ENCODE measurements at regions of chr19 and their contacts with region 1.

Region 1: DNA sequence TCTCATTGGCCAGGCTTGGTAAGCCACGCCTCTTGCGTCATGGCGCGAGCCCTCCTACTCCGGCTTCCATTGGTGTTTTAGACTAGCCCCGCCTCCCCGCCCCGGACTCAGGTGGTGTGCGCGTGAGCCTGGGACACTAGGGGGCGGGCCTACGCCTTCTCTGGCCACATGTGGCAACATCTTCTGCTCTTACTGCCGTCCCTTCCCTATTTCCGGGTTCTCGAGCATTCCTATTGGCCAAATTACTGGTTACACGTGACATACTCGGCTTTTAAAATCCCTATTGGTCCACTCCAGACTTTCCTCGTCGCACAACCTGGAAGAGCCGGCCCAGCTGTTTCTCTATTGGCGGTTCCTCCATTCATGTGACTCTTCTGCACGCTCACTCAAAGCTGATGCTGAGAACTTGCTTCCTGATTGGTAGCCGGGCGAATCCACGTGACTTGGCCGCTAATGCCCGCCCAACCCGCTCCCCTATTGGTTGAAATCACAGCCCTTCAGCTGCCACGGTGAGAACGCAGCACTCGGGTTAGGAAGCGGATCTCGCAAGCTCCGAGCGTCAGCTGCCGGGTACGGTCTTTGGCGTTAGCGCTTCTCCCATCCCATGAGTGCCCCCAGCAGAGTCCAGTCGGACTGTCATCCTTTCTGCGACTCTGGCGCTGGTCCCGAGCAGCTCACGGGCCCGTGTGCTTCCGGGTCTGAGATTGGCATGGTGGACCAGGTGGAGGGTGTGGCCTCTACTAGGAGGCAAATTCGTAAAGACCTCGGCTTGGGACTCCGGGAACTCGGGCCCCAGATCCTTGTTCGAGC is at the start of gene BLOC1S3:
- DNase-seq: peak; percentile 97 to 100 (median 100)
- ATAC-seq: peak; percentile 93
- H3K4me3 ChIP-seq: peak within 1 kb of the TSS; percentile 88
- H3K4me3 Mint-ChIP-seq: peak within 1 kb of the TSS; percentile 87 to 99 (median 96)
- H3K27ac ChIP-seq: peak within 1 kb of the TSS; percentile 83
- H3K27ac Mint-ChIP-seq: peak within 1 kb of the TSS; percentile 88 to 98 (median 94)
- H3K4me1 ChIP-seq: peaks cover 23 to 34% of the 10 kb centered on the region in 2 donors
- H3K4me1 Mint-ChIP-seq: peaks cover 9 to 63% (median 49%) of the 10 kb centered on the region in 7 donors
- H3K27me3 ChIP-seq: no peaks in the 10 kb centered on the region
- H3K27me3 Mint-ChIP-seq: no peaks in the 10 kb centered on the region
- total RNA-seq, gene BLOC1S3: 13.7 to 24.9 (median 15.4) TPM

Region 2: DNA sequence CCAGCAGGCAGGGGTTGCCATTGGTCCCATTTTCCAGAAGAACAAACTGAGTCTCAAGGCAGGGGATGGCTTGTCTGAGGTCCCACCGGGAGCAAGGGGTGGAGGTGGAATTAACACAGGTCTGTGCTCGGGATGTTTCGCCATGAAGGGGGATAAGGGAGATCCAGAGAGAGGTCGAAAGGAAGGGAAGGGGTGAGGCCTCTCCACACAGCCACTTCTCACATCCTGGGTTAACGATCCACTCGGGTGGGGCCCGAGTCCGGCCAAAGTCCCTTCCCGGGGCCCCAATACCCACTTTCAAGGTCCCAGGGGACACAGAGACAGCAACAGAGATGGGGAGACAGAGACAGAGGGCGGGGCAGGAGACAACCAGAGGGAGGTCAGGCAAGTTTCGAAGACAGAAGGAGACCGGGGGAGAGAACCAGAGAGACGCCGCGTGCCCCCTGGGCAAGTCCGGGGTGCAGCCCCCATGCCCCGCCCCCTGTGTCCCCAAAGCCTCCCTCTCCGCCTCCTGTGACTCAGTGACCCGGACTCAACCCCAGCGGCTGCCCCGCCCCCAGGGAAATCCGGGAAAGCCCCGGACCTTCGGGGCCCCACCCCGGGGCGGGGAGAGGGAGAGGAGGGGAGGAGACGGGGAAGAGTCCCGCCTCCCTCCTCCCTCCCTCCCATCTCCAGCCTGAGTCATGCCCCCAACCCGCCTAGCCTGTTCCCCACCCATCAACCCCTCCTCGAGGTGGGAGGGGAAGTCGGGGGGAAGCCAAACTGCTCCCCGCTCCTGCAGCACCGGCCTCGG is 431.3 kb before region 1 on chr19:
- CTCF ChIA-PET with region 1: no interaction called
- POLR2A ChIA-PET with region 1: no interaction called
- intact Hi-C with region 1: loop called in 1 of 2 experiments (anchors 1 kb)
- DNase-seq: peak; percentile 51 to 97 (median 61)
- ATAC-seq: peak; percentile 83
- H3K4me3 ChIP-seq: peak overlapping the region; percentile 91
- H3K4me3 Mint-ChIP-seq: peak overlapping the region; percentile 90 to 99 (median 92)
- H3K27ac ChIP-seq: peak overlapping the region; percentile 97
- H3K27ac Mint-ChIP-seq: peak overlapping the region; percentile 87 to 99 (median 94)
- H3K4me1 ChIP-seq: peaks cover 23 to 33% of the 10 kb centered on the region in 2 donors
- H3K4me1 Mint-ChIP-seq: peaks cover 35 to 56% (median 55%) of the 10 kb centered on the region in 7 donors
- H3K27me3 ChIP-seq: no peaks in the 10 kb centered on the region
- H3K27me3 Mint-ChIP-seq: peaks cover 0 to 3% (median 0%) of the 10 kb centered on the region in 5 donors

Region 3: DNA sequence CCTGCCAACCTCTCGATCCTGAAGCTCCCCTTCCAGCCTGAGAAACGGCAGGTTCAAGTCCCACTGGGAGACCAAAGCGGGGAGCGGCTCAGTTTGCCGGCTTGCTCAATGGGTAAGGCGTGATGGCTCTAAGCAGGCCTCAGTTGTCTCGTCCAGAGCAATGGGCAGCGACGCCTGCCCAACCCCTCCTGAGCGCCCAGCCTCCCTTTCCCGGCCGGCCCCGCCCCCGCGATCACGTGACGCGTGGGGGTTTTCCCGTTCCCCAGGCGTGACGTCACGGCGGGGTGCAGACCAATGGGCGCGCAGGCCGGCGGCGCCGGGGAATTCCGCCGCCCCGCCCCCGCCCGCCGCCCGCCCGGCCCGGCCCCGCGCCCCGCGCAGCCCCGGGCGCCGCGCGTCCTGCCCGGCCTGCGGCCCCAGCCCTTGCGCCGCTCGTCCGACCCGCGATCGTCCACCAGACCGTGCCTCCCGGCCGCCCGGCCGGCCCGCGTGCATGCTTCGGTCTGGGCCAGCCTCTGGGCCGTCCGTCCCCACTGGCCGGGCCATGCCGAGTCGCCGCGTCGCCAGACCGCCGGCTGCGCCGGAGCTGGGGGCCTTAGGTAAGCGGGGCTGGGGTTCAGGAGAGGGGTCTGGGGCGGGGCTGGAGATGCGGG is 177.3 kb before region 1 on chr19 and contains the start of gene RELB:
- CTCF ChIA-PET with region 1: no interaction called
- POLR2A ChIA-PET with region 1: interaction called, 8 read pairs
- intact Hi-C with region 1: loop called (anchors 1 kb)
- DNase-seq: peak; percentile 90 to 100 (median 94)
- ATAC-seq: peak; percentile 75
- H3K4me3 ChIP-seq: peak within 1 kb of the TSS; percentile 92
- H3K4me3 Mint-ChIP-seq: peak within 1 kb of the TSS; percentile 91 to 100 (median 96)
- H3K27ac ChIP-seq: peak within 1 kb of the TSS; percentile 100
- H3K27ac Mint-ChIP-seq: peak within 1 kb of the TSS; percentile 93 to 100 (median 100)
- H3K4me1 ChIP-seq: peaks cover 8 to 13% of the 10 kb centered on the region in 2 donors
- H3K4me1 Mint-ChIP-seq: peaks cover 8 to 25% (median 14%) of the 10 kb centered on the region in 7 donors
- H3K27me3 ChIP-seq: no peaks in the 10 kb centered on the region
- H3K27me3 Mint-ChIP-seq: no peaks in the 10 kb centered on the region
- total RNA-seq, gene RELB: 30.7 to 87.3 (median 71.3) TPM

Region 4: DNA sequence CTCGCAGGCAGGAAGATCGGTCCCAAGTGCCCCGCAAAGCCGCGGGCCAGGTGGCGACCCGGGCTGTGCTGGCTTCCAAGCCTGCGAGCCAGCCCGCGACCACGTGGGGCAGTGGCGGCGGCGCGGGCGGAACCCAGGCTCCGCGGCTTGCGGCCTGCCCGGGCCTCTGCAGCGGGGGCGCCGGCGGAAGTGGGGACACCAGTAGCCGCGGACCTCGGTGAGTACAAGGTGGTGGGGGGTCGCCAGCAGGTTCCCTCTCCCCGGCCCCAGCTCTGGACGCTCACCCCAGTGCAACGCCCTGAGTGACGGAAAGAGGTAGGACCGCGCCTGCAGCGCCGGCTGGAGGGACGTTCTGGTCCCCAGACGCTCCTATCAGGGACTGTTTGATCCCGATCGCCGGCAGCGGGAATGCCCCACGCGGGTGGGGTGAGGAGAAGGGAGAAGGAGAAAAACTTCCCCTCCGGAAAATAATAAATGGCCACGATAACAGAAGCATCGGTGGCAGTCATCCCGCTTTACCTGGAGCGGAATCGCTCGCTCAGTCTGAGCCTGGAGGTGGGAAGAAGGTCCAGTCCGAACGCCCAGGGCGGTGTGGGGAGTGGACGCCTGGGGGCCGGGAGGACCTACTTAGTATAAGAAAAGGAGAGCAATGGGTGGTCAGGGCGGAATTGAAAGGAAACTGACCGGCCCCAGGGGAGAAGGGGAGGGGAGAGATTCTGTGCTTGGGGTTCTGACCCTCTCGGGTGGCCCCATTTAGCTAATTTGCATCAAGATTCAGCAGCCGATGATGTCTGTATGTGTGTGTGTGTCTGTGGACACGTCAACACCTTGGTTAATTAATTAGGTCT is 99.2 kb before region 1 on chr19 and contains the start of gene GEMIN7:
- CTCF ChIA-PET with region 1: no interaction called
- POLR2A ChIA-PET with region 1: interaction called, 7 read pairs
- intact Hi-C with region 1: loop called (anchors 1 to 5 kb)
- DNase-seq: peak; percentile 60 to 90 (median 75)
- ATAC-seq: peak; percentile 76
- H3K4me3 ChIP-seq: peak within 1 kb of the TSS; percentile 99
- H3K4me3 Mint-ChIP-seq: peak within 1 kb of the TSS; percentile 87 to 99 (median 94)
- H3K27ac ChIP-seq: peak within 1 kb of the TSS; percentile 86
- H3K27ac Mint-ChIP-seq: peak within 1 kb of the TSS; percentile 79 to 94 (median 84)
- H3K4me1 ChIP-seq: peaks cover 22 to 31% of the 10 kb centered on the region in 2 donors
- H3K4me1 Mint-ChIP-seq: peaks cover 32 to 53% (median 48%) of the 10 kb centered on the region in 7 donors
- H3K27me3 ChIP-seq: no peaks in the 10 kb centered on the region
- H3K27me3 Mint-ChIP-seq: no peaks in the 10 kb centered on the region
- total RNA-seq, gene GEMIN7: 4.9 to 31.6 (median 16.6) TPM

Region 5: DNA sequence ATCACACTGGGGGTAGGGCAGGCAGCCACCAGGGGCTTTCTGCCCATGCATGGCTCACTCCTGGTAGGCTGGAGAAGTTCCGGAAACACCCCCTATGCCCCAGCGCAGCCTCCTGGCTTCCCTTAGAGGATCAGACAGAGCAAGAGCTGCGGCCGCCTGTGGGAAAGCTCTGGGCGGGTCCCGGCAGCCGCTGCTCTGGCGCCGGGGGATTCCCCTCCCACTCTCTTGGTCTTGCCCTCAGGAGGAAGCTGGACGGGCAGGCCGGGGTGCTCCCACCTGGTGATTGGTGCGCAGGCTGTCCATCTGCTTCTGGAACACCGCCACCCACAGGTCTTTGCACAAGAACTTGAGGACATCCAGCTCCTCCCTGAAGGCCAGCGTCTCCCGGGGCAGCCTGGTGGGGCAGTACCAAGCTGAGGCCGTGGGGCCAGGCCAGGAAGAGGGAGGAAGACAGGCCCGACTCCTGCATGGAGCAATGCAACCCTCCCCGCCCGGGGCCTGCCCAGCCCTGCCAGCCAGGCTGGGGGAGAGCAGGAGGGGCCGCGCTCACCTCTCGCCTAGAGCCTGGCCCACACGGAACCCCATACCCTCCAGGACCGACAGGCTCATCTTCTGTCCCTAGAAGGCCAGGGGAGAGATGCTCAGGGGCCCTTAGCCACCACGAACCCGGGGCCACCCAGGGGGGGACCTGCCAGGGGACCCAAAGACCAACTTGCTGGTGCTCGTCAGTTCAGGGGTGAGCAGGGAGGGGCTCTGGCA is 13.7 kb before region 1 on chr19:
- CTCF ChIA-PET with region 1: interaction called, 3 read pairs
- POLR2A ChIA-PET with region 1: interaction called, 16 read pairs
- intact Hi-C with region 1: no loop called
- DNase-seq: peak in 7 of 9 donors; percentile 12 to 75 (median 34)
- ATAC-seq: peak; percentile 85
- H3K4me3 ChIP-seq: no peak overlapping the region
- H3K4me3 Mint-ChIP-seq: peak overlapping the region in 3 of 10 donors; percentile 15 to 33 (median 28)
- H3K27ac ChIP-seq: peak overlapping the region; percentile 54
- H3K27ac Mint-ChIP-seq: peak overlapping the region in 3 of 9 donors; percentile 8 to 76 (median 17)
- H3K4me1 ChIP-seq: peaks cover 9 to 18% of the 10 kb centered on the region in 2 donors
- H3K4me1 Mint-ChIP-seq: peaks cover 6 to 34% (median 23%) of the 10 kb centered on the region in 7 donors
- H3K27me3 ChIP-seq: no peaks in the 10 kb centered on the region
- H3K27me3 Mint-ChIP-seq: no peaks in the 10 kb centered on the region

Region 6: GRCh38 chr19:45405435-45406225 is 227.2 kb after region 1 on chr19:
- CTCF ChIA-PET with region 1: no interaction called
- POLR2A ChIA-PET with region 1: no interaction called
- intact Hi-C with region 1: loop called in 1 of 2 experiments (anchors 1 kb)
- DNase-seq: peak; percentile 62 to 88 (median 81)
- ATAC-seq: peak; percentile 75
- H3K4me3 ChIP-seq: peak overlapping the region; percentile 77
- H3K4me3 Mint-ChIP-seq: peak overlapping the region; percentile 91 to 99 (median 97)
- H3K27ac ChIP-seq: peak overlapping the region; percentile 71
- H3K27ac Mint-ChIP-seq: peak overlapping the region; percentile 90 to 99 (median 94)
- H3K4me1 ChIP-seq: peaks cover 16 to 25% of the 10 kb centered on the region in 2 donors
- H3K4me1 Mint-ChIP-seq: peaks cover 28 to 53% (median 32%) of the 10 kb centered on the region in 7 donors
- H3K27me3 ChIP-seq: peaks cover 10 to 18% of the 10 kb centered on the region in 2 donors
- H3K27me3 Mint-ChIP-seq: peaks cover 15 to 27% (median 21%) of the 10 kb centered on the region in 5 donors

Region 7: GRCh38 chr19:45584332-45585157 is 406.1 kb after region 1 on chr19 and contains the start of gene OPA3:
- CTCF ChIA-PET with region 1: no interaction called
- POLR2A ChIA-PET with region 1: no interaction called
- intact Hi-C with region 1: loop called (anchors 1 kb)
- DNase-seq: peak; percentile 88 to 100 (median 99)
- ATAC-seq: peak; percentile 92
- H3K4me3 ChIP-seq: peak within 1 kb of the TSS; percentile 85
- H3K4me3 Mint-ChIP-seq: peak within 1 kb of the TSS; percentile 90 to 99 (median 94)
- H3K27ac ChIP-seq: peak within 1 kb of the TSS; percentile 99
- H3K27ac Mint-ChIP-seq: peak within 1 kb of the TSS; percentile 97 to 100 (median 99)
- H3K4me1 ChIP-seq: peaks cover 6 to 10% of the 10 kb centered on the region in 2 donors
- H3K4me1 Mint-ChIP-seq: peaks cover 0 to 28% (median 20%) of the 10 kb centered on the region in 7 donors
- H3K27me3 ChIP-seq: no peaks in the 10 kb centered on the region
- H3K27me3 Mint-ChIP-seq: peaks cover 5 to 9% (median 7%) of the 10 kb centered on the region in 5 donors
- total RNA-seq, gene OPA3: 7.8 to 14.3 (median 9.0) TPM

Measured in naive thymus-derived CD4-positive, alpha-beta T cell (primary cell).